Activated CD8-positive, alpha-beta T cell treated with anti-CD3 and anti-CD28 coated beads for 36 hours (primary cell): ENCODE measurements at regions of chr12 and their contacts with region 1.

Region 1: GRCh38 chr12:105235732-105236476 is at the start of gene APPL2:
- DNase-seq: peak; percentile 84
- ATAC-seq: peak; percentile 84
- H3K4me3 Mint-ChIP-seq: peak within 1 kb of the TSS; percentile 90
- H3K27ac Mint-ChIP-seq: peak within 1 kb of the TSS; percentile 86
- H3K4me1 Mint-ChIP-seq: peaks cover 44% of the 10 kb centered on the region
- H3K27me3 Mint-ChIP-seq: no peaks in the 10 kb centered on the region
- CTCF ChIP-seq: peak; percentile 55
- total RNA-seq, gene APPL2: 14.5 to 15.8 TPM

Region 2: GRCh38 chr12:104805186-104805585 is 430.7 kb before region 1 on chr12:
- CTCF ChIA-PET with region 1: no interaction called
- POLR2A ChIA-PET with region 1: no interaction called
- intact Hi-C with region 1: no loop called
- DNase-seq: no peak
- ATAC-seq: no peak
- H3K4me3 Mint-ChIP-seq: no peak overlapping the region
- H3K27ac Mint-ChIP-seq: no peak overlapping the region
- H3K4me1 Mint-ChIP-seq: no peaks in the 10 kb centered on the region
- H3K27me3 Mint-ChIP-seq: no peaks in the 10 kb centered on the region
- CTCF ChIP-seq: no peak

Region 3: DNA sequence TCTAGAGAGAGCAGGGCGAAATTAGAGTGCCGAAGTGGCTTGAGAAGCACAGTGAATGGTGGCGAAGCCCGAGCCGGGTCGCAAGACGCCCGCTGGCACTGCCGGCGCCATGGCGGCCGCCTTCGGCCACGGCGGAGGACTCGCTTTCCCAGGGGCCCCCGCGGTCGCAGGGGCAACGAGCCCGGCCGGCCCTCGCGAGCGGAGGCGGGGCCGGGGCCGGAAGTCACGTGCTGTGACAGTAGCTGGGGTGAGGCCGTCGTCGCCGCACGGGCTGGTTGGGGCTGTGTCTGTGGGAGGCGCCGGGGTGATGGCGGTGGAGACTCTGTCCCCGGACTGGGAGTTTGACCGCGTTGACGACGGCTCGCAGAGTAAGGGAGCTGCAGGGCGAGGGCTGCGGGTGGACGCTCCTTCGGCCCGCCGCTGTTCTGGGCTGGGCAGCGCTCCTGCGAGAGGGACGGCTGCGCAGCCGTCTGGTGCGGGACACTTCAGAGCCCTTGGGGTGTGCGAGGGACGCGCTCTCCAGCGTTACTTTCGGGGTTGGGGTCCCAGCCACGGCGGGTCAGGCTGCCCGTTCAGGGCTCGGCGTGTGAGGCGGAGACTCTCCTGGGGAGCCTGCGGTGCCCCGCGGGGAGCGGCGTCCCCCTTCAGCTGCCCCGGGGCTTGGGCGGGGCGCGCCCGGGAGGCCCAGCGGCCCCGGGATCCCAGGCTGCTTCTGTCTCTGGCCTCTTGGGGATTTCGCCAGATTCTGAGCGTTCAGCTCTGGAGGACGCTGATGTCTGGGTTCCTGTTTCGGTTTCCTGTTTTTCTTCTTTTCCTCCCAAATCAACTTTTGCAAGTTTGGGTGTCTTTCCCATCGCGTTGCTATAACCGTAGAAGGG is 128.2 kb before region 1 on chr12 and contains the start of gene WASHC4:
- CTCF ChIA-PET with region 1: no interaction called
- POLR2A ChIA-PET with region 1: interaction called, 5 read pairs
- intact Hi-C with region 1: loop called (anchors 5 kb)
- DNase-seq: peak; percentile 94
- ATAC-seq: peak; percentile 96
- H3K4me3 Mint-ChIP-seq: peak within 1 kb of the TSS; percentile 95
- H3K27ac Mint-ChIP-seq: peak within 1 kb of the TSS; percentile 94
- H3K4me1 Mint-ChIP-seq: peaks cover 34% of the 10 kb centered on the region
- H3K27me3 Mint-ChIP-seq: peaks cover 12% of the 10 kb centered on the region
- CTCF ChIP-seq: no peak
- total RNA-seq, gene WASHC4: 28.7 to 29.2 TPM

Region 4: GRCh38 chr12:105225505-105226015 is 10.3 kb before region 1 on chr12:
- CTCF ChIA-PET with region 1: interaction called, 12 read pairs
- POLR2A ChIA-PET with region 1: interaction called, 3 read pairs
- intact Hi-C with region 1: no loop called
- DNase-seq: no peak
- ATAC-seq: no peak
- H3K4me3 Mint-ChIP-seq: no peak overlapping the region
- H3K27ac Mint-ChIP-seq: no peak overlapping the region
- H3K4me1 Mint-ChIP-seq: peaks cover 54% of the 10 kb centered on the region
- H3K27me3 Mint-ChIP-seq: no peaks in the 10 kb centered on the region
- CTCF ChIP-seq: no peak

Region 5: GRCh38 chr12:105256921-105257320 is 21.0 kb after region 1 on chr12:
- CTCF ChIA-PET with region 1: no interaction called
- POLR2A ChIA-PET with region 1: no interaction called
- intact Hi-C with region 1: no loop called
- DNase-seq: no peak
- ATAC-seq: no peak
- H3K4me3 Mint-ChIP-seq: no peak overlapping the region
- H3K27ac Mint-ChIP-seq: no peak overlapping the region
- H3K4me1 Mint-ChIP-seq: peaks cover 7% of the 10 kb centered on the region
- H3K27me3 Mint-ChIP-seq: peaks cover 6% of the 10 kb centered on the region
- CTCF ChIP-seq: no peak

Region 6: DNA sequence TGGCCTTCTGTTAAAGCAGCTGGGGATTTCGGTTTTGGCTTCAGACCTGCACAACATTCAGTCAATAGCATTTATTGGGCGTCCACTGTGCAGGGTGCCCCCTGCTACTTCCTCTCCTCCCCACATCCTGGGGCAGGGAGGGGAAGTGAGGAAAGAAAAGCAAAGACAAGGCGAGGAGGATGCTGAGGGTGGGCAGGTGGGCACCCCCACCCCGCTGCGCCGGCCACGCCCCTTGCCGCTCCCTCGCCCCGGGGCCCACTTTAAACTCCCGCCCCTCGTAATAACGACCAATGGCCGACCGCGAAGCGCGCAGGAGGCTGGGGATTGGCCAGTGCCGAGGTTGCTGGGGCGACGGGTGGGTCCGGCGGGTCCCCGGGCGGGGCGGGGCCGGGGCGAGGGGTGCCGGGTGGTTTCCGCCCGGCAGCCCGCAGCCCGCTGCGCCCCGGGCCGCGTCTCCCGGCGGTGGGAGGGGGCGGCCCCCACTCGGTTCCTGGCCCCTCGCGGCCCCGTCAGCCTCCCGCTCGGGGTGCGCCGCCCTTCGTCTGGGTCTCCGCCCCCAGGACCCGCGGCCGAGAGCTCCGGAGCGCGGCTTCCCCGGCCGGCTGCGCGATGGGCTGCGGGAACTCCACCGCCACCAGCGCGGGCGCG is 94.5 kb after region 1 on chr12 and contains the start of gene C12orf75:
- CTCF ChIA-PET with region 1: interaction called, 17 read pairs
- POLR2A ChIA-PET with region 1: interaction called, 3 read pairs
- intact Hi-C with region 1: no loop called
- DNase-seq: peak; percentile 92
- ATAC-seq: peak; percentile 91
- H3K4me3 Mint-ChIP-seq: peak within 1 kb of the TSS; percentile 79
- H3K27ac Mint-ChIP-seq: peak within 1 kb of the TSS; percentile 90
- H3K4me1 Mint-ChIP-seq: peaks cover 48% of the 10 kb centered on the region
- H3K27me3 Mint-ChIP-seq: no peaks in the 10 kb centered on the region
- CTCF ChIP-seq: no peak
- total RNA-seq, gene C12orf75: 62.0 to 66.9 TPM

Region 7: GRCh38 chr12:105393587-105393986 is 157.7 kb after region 1 on chr12:
- CTCF ChIA-PET with region 1: no interaction called
- POLR2A ChIA-PET with region 1: no interaction called
- intact Hi-C with region 1: no loop called
- DNase-seq: no peak
- ATAC-seq: no peak
- H3K4me3 Mint-ChIP-seq: no peak overlapping the region
- H3K27ac Mint-ChIP-seq: no peak overlapping the region
- H3K4me1 Mint-ChIP-seq: no peaks in the 10 kb centered on the region
- H3K27me3 Mint-ChIP-seq: no peaks in the 10 kb centered on the region
- CTCF ChIP-seq: no peak